ENCODE measurements at regions of chr22 and their contacts with region 1.

Region 1: DNA sequence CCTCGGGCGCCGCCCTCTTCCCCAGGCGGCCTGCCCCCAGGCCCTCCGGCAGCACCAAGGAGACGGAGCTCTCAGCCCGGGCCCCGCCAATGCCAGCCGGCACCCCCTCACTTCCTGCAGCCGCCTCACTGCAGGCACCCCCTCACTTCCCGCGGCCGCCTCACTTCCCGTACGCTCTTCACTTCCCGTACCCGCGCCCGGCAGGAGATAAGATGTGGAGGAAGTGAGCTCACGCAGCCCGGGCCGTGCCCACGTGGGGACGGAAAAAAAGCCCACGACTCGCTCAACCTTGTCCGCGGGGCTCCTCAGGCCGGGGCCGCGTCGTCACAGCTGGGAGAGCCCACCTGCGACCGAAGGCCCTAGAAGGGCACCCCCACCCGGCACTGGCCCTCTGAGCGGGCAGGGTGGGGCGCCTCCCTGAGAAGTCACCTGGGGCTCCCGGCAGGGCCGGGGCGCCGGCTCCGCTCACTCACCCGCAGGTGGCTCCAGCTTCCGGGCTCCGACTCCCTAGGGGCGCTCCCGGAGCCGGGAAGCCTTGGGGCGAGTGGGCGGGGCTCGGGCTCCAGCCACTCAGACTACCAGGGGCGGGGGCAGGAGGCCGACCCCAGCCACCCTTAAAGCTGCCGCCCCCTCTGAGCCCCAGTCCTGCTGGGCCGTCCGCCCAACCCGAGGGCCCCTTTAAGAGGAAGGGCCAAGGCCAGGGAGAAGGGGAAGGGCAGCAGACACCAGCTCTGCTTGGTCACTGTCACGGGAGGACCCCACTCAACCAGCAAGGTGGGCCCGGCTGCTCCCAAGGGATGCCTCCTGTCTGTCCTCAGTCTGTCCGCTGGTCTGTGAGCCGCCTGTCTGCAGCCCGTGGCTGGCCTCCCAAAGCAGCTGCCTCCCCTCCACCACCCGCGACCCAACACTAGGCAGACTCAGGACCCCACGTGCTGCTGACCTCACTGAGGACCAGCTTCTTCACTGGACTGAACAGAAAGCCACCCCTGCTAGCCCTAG is 31.4 kb downstream of the PISD start:
- DNase-seq: peak; percentile 94
- ATAC-seq: peak; percentile 83 to 89
- H3K4me3 ChIP-seq: peak overlapping the region; percentile 68
- H3K27ac ChIP-seq: peak overlapping the region; percentile 65
- H3K4me1 ChIP-seq: peaks cover 22% of the 10 kb centered on the region
- H3K27me3 ChIP-seq: no peaks in the 10 kb centered on the region

Region 2: GRCh38 chr22:31345331-31346254 is 285.0 kb before region 1 on chr22:
- intact Hi-C with region 1: loop called in 1 of 4 experiments (anchors 10 kb)
- DNase-seq: peak; percentile 86 to 96 (median 95)
- ATAC-seq: peak; percentile 58 to 60
- H3K4me3 ChIP-seq: peak overlapping the region; percentile 82
- H3K27ac ChIP-seq: peak overlapping the region; percentile 85
- H3K4me1 ChIP-seq: peaks cover 5% of the 10 kb centered on the region
- H3K27me3 ChIP-seq: no peaks in the 10 kb centered on the region

Region 3: DNA sequence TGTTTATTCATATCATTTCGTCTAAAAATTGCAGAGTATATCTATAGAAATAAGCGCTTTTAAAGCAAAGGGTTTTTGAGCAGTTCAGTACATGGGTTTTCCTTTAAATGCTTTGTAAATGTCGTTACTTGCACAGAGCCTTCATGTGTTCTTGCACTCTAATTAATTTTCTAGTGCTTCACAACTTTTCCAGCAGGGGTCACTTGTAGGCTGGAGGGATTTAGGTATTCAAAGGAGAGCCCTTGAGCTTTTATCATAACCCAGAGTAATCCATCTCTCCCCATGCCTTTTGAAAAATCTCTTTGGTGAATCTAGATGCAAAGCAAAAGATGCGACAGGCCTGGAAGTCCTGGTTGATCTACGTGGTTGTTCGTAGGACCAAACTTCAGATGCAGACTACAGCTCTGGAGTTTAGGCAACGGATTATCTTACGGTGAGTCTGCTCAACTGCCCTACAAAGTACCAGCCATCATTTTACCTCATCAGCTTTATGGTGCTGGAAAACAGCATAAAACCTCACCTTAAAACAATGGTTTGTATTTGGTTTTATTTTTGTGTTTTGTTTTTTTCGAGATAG is 73.9 kb before region 1 on chr22:
- intact Hi-C with region 1: loop called in 3 of 4 experiments (anchors 5 kb)
- DNase-seq: no peak
- ATAC-seq: peak; percentile 40 to 41
- H3K4me3 ChIP-seq: no peak overlapping the region
- H3K27ac ChIP-seq: no peak overlapping the region
- H3K4me1 ChIP-seq: no peaks in the 10 kb centered on the region
- H3K27me3 ChIP-seq: no peaks in the 10 kb centered on the region

Region 4: GRCh38 chr22:31561961-31562360 is 68.7 kb before region 1 on chr22:
- intact Hi-C with region 1: loop called (anchors 2 to 5 kb)
- DNase-seq: no peak
- ATAC-seq: no peak
- H3K4me3 ChIP-seq: no peak overlapping the region
- H3K27ac ChIP-seq: no peak overlapping the region
- H3K4me1 ChIP-seq: no peaks in the 10 kb centered on the region
- H3K27me3 ChIP-seq: no peaks in the 10 kb centered on the region

Measured in right cardiac atrium (tissue), 5 donors.